Activated CD4-positive, alpha-beta T cell treated with anti-CD3 and anti-CD28 coated beads, Interleukin-2, amount 10 ng/mL, durations not matched to agents 24 days and 14 days (primary cell): ENCODE measurements at regions of chr9 and their contacts with region 1.

Region 1: GRCh38 chr9:21761309-21761901 is 41.0 kb upstream of the MTAP start:
- DNase-seq: peak; percentile 83
- H3K4me3 Mint-ChIP-seq: no peak overlapping the region
- H3K27ac Mint-ChIP-seq: no peak overlapping the region
- H3K4me1 Mint-ChIP-seq: peaks cover 13% of the 10 kb centered on the region
- H3K27me3 Mint-ChIP-seq: peaks cover 73% of the 10 kb centered on the region

Region 2: GRCh38 chr9:21357479-21358460 is 403.6 kb before region 1 on chr9:
- intact Hi-C with region 1: loop called (anchors 1 kb)
- DNase-seq: peak; percentile 77
- H3K4me3 Mint-ChIP-seq: peak overlapping the region; percentile 58
- H3K27ac Mint-ChIP-seq: peak overlapping the region; percentile 83
- H3K4me1 Mint-ChIP-seq: peaks cover 14% of the 10 kb centered on the region
- H3K27me3 Mint-ChIP-seq: peaks cover 50% of the 10 kb centered on the region

Region 3: GRCh38 chr9:21576331-21577189 is 184.8 kb before region 1 on chr9:
- intact Hi-C with region 1: loop called (anchors 5 kb)
- DNase-seq: peak; percentile 72
- H3K4me3 Mint-ChIP-seq: peak overlapping the region; percentile 7
- H3K27ac Mint-ChIP-seq: no peak overlapping the region
- H3K4me1 Mint-ChIP-seq: peaks cover 29% of the 10 kb centered on the region
- H3K27me3 Mint-ChIP-seq: peaks cover 27% of the 10 kb centered on the region

Region 4: GRCh38 chr9:21677834-21678233 is 83.6 kb before region 1 on chr9:
- intact Hi-C with region 1: no loop called
- DNase-seq: no peak
- H3K4me3 Mint-ChIP-seq: no peak overlapping the region
- H3K27ac Mint-ChIP-seq: no peak overlapping the region
- H3K4me1 Mint-ChIP-seq: no peaks in the 10 kb centered on the region
- H3K27me3 Mint-ChIP-seq: peaks cover 6% of the 10 kb centered on the region

Region 5: DNA sequence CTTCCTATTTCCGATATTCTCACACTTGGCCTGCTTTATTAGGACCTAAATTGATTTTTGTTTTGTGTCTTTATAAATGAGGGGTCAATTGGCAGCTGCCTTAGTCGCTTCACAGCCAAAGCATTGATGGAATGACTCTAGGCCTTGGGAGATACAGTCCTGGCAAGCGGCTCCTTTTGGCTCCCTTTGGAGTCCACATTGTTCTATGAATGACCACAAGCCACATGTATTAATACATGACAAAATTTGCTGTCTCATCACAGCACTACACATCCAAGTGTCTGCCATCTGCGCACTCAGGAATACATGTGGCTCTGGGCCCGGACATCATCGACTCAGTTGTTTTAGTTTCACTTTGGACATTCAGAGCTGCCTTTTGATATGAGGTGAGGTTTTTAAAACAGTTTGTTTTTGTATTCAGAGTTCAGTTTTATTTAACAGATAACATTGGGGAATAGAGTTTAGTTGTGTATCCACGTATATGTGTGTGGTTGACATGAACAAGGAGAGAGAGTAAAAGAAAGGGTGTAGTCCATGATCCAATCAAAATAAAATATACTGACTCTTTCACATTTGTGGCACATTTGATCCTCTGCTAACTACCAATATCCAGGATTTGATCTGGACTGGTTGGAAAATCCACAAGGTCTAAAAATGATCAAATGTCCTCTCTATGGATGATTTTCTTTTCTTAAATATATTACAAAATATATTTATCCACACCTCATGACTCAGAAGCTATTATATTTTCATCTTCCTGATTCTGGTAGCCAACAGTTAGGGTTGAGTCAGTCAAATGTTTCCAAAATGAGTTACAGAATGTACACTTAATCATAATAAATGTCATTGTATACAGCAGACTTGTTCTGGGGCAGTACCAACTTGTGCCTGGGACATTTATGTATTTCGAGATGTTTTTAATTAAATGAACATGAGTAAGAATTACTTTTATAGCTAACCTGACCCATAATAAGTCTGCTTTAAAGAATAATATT is 73.0 kb before region 1 on chr9:
- intact Hi-C with region 1: loop called (anchors 1 kb)
- DNase-seq: no peak
- H3K4me3 Mint-ChIP-seq: no peak overlapping the region
- H3K27ac Mint-ChIP-seq: no peak overlapping the region
- H3K4me1 Mint-ChIP-seq: peaks cover 24% of the 10 kb centered on the region
- H3K27me3 Mint-ChIP-seq: peaks cover 15% of the 10 kb centered on the region

Region 6: GRCh38 chr9:21796768-21797167 is 35.4 kb after region 1 on chr9:
- intact Hi-C with region 1: loop called (anchors 5 kb)
- DNase-seq: no peak
- H3K4me3 Mint-ChIP-seq: no peak overlapping the region
- H3K27ac Mint-ChIP-seq: no peak overlapping the region
- H3K4me1 Mint-ChIP-seq: peaks cover 9% of the 10 kb centered on the region
- H3K27me3 Mint-ChIP-seq: peaks cover 50% of the 10 kb centered on the region

Region 7: DNA sequence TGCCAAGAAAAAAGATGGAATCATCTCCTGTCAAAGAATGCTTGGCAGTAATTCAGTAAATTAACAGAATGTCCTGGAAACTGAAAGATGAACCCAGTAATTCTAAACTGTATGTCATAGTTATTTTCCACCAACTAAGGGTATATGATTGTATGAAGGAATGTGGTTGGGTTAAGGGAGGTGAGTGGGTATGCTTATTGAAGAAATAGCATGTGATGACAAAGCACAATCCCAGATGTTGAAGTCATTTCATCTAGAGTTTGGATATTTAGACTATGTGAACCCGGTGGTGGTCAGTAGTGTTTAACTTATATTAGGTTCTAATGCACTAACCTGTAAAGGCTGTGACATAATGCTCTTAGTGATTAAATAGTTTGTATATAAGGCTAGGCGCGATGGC is 145.5 kb after region 1 on chr9:
- intact Hi-C with region 1: no loop called
- DNase-seq: no peak
- H3K4me3 Mint-ChIP-seq: no peak overlapping the region
- H3K27ac Mint-ChIP-seq: no peak overlapping the region
- H3K4me1 Mint-ChIP-seq: no peaks in the 10 kb centered on the region
- H3K27me3 Mint-ChIP-seq: no peaks in the 10 kb centered on the region